ENCODE measurements at regions of chr6 and their contacts with region 1.

Region 1: DNA sequence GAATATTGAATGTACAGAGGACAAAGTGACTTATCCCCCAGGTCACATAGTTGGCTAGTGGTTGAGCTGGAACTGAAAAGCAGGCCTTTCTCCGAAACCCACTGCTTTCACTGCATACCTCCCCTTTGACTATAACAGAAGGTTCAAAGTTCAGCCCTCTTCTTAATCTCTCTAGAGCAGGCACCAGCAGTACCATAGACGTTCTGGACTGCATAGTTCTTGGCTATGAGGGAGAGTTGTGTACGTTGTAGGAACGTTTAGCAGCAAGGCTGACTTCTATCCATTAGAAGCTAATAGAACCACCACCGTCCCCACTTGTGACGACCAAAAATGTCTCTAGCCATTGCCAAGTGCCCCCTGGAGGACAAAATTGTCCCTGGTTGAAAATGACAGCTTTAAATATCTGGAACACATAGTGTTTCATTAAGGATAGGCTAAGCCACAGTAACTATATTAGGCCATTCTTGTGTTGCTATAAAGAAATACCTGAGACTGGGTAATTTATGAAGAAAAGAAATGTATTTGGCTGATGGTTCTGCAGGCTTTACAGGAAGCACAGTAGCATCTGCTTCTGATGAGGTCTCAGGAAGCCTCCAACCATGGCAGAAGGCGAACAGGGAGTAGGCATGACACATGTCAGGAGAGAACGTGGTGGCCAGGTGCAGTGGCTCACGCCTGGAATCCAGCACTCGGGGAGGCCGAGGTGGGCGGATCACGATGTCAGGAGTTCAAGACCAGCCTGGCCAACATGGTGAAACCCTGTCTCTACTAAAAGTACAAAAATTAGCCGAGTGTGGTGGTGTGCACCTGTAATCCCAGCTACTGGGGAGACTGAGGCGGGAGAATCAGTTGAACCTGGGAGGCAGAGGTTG is 123.6 kb upstream of the MTHFD1L start:
- DNase-seq: peak; percentile 77
- ATAC-seq: peak; percentile 33
- H3K4me3 ChIP-seq: no peak overlapping the region
- H3K4me3 Mint-ChIP-seq: no peak overlapping the region
- H3K27ac ChIP-seq: peak overlapping the region in 1 of 2 donors; percentile 31
- H3K27ac Mint-ChIP-seq: peak overlapping the region; percentile 27
- H3K4me1 ChIP-seq: peaks cover 13 to 17% of the 10 kb centered on the region in 2 donors
- H3K4me1 Mint-ChIP-seq: peaks cover 67% of the 10 kb centered on the region
- H3K27me3 ChIP-seq: no peaks in the 10 kb centered on the region
- H3K27me3 Mint-ChIP-seq: no peaks in the 10 kb centered on the region
- CTCF ChIP-seq: peak; percentile 82

Region 2: DNA sequence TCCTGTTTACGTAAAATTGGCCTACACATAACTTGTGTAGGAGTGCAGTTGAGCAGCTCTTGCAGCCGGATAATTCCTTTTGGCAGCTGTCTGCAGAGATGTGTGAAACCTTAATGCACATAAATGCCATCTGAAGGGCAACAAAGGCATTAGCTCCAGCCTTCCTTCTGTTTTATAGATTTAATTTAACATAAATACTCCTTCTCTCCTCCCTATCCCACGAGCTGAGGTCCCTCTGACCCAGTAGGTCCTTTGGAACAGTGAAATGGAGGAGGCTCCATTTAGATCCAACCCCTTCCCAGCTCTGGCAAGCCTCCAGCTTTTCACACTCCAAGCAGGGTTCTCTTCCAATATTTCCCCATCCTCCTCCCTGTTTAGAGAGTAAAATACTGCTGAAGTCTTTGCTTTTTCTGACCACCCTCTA is 135.7 kb before region 1 on chr6:
- CTCF ChIA-PET with region 1: interaction called, 11 read pairs
- POLR2A ChIA-PET with region 1: no interaction called
- intact Hi-C with region 1: no loop called
- DNase-seq: no peak
- ATAC-seq: no peak
- H3K4me3 ChIP-seq: no peak overlapping the region
- H3K4me3 Mint-ChIP-seq: no peak overlapping the region
- H3K27ac ChIP-seq: no peak overlapping the region
- H3K27ac Mint-ChIP-seq: no peak overlapping the region
- H3K4me1 ChIP-seq: peaks cover 59 to 62% of the 10 kb centered on the region in 2 donors
- H3K4me1 Mint-ChIP-seq: peaks cover 80% of the 10 kb centered on the region
- H3K27me3 ChIP-seq: no peaks in the 10 kb centered on the region
- H3K27me3 Mint-ChIP-seq: no peaks in the 10 kb centered on the region
- CTCF ChIP-seq: no peak

Region 3: GRCh38 chr6:150632785-150633485 is 108.9 kb before region 1 on chr6:
- CTCF ChIA-PET with region 1: interaction called, 5 read pairs
- POLR2A ChIA-PET with region 1: no interaction called
- intact Hi-C with region 1: loop called (anchors 5 kb)
- DNase-seq: peak; percentile 80
- ATAC-seq: peak; percentile 40
- H3K4me3 ChIP-seq: peak overlapping the region; percentile 55 to 85 (median 79)
- H3K4me3 Mint-ChIP-seq: peak overlapping the region; percentile 98
- H3K27ac ChIP-seq: peak overlapping the region; percentile 91 to 94
- H3K27ac Mint-ChIP-seq: peak overlapping the region; percentile 93
- H3K4me1 ChIP-seq: peaks cover 79 to 81% of the 10 kb centered on the region in 2 donors
- H3K4me1 Mint-ChIP-seq: peaks cover 85% of the 10 kb centered on the region
- H3K27me3 ChIP-seq: no peaks in the 10 kb centered on the region
- H3K27me3 Mint-ChIP-seq: no peaks in the 10 kb centered on the region
- CTCF ChIP-seq: no peak

Region 4: DNA sequence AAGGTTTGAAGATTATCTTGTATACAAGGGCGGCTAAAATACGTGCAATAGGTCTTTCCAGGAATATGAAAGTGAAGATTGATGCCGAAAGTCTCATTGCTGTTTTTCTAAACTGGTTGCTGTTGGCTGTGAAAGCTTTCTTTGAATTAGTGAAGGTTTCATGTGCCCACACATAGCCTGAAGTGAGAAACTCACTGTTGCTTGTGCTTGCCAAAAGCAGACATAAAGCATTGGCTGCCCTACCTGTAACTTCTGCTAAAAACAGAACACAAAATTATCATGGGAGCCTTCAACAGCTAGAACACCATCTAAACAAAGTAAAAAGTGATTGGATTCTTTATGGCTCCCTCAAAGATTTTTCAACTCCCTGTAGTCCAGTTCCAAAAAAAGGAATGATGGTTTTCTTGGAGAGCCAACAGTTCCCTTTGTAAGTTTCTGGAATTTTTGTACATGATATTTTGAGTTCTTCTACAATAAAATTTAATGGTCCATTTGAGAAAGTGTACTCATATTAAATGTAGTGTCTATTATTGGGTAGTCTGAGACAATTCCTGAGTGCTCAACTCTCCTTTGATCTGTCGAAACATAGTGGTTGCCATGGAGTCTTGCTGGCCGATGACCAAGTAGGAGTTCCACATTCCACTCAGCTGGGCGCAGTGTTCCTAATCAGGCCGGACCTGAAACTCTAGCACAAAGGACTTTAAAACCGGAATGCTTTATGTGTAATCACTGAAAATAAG is 73.7 kb before region 1 on chr6:
- CTCF ChIA-PET with region 1: interaction called, 3 read pairs
- POLR2A ChIA-PET with region 1: no interaction called
- intact Hi-C with region 1: loop called (anchors 5 kb)
- DNase-seq: no peak
- ATAC-seq: no peak
- H3K4me3 ChIP-seq: no peak overlapping the region
- H3K4me3 Mint-ChIP-seq: no peak overlapping the region
- H3K27ac ChIP-seq: peak overlapping the region in 1 of 2 donors; percentile 72
- H3K27ac Mint-ChIP-seq: peak overlapping the region; percentile 27
- H3K4me1 ChIP-seq: peaks cover 6 to 26% of the 10 kb centered on the region in 2 donors
- H3K4me1 Mint-ChIP-seq: peaks cover 57% of the 10 kb centered on the region
- H3K27me3 ChIP-seq: no peaks in the 10 kb centered on the region
- H3K27me3 Mint-ChIP-seq: no peaks in the 10 kb centered on the region
- CTCF ChIP-seq: no peak

Region 5: DNA sequence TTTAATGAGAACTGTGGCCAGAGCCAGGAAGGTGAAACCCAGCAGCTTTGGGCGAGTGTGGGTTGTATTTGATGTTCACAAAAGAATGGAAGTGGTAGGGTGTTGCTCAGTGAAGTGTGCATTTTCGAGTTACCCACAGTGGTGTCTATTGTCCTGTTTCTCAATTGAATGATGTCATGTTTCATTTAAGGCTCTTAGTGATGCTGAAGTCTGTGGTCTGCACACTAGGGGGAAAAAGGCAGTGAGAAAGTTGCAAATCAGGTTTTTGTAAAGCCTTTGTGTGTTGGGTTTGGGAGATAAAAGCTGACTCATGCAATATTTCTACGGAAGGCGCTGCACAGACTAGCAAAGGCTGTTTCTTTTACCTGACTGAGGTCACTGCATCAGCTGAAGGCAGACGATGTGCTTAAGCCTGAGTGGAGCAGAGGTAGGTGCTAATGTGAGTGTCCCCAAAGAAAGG is 21.1 kb before region 1 on chr6:
- CTCF ChIA-PET with region 1: interaction called, 6 read pairs
- POLR2A ChIA-PET with region 1: no interaction called
- intact Hi-C with region 1: loop called (anchors 2 kb)
- DNase-seq: peak; percentile 77
- ATAC-seq: peak; percentile 93
- H3K4me3 ChIP-seq: no peak overlapping the region
- H3K4me3 Mint-ChIP-seq: peak overlapping the region; percentile 40
- H3K27ac ChIP-seq: peak overlapping the region in 1 of 2 donors; percentile 56
- H3K27ac Mint-ChIP-seq: peak overlapping the region; percentile 54
- H3K4me1 ChIP-seq: peaks cover 43 to 53% of the 10 kb centered on the region in 2 donors
- H3K4me1 Mint-ChIP-seq: peaks cover 75% of the 10 kb centered on the region
- H3K27me3 ChIP-seq: no peaks in the 10 kb centered on the region
- H3K27me3 Mint-ChIP-seq: no peaks in the 10 kb centered on the region
- CTCF ChIP-seq: peak; percentile 52

Measured in B cell (primary cell).